Sciatic nerve (tissue), 2 donors: ENCODE measurements at regions of chr14 and their contacts with region 1.

Region 1: GRCh38 chr14:21204167-21205025 is 48.5 kb upstream of the OR5AU1 start:
- DNase-seq: no peak
- ATAC-seq: no peak

Region 2: DNA sequence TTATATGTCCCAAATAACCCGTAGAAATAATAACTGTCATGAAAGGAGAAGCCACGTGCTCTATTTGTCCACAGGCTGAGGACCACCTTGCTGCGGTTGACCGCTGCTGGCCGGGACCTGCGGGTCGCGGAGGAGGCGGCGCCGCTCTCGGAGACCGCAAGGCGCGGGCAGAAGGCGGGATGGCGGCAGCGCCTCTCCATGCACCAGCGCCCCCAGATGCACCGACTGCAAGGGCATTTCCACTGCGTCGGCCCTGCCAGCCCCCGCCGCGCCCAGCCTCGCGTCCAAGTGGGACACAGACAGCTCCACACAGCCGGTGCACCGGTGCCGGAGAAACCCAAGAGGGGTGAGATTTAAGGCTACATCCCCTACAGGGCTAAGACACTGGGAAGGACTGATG is 96.5 kb after region 1 on chr14:
- intact Hi-C with region 1: no loop called
- DNase-seq: no peak
- ATAC-seq: no peak

Region 3: DNA sequence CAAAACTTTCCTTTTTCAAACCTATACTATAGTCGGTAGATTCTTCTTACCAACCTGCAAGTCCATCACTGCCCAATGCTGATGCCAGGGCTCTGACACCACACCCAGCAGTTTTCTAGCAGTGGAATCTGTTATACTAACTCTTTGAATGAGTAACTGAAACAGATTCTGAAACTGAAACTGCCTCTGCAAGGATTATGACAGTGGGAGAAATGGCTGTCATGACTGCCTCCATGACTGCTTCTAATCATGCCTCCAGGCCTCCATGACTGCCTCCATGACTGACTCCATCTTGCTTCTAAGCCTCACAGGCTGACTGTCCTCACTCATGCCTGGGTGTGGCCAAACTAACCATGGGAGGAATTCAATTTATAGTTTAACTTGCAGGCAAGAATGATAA is 1532.7 kb after region 1 on chr14:
- intact Hi-C with region 1: loop called (anchors 5 kb)
- DNase-seq: no peak
- ATAC-seq: no peak